Right ventricle myocardium inferior (tissue), 1 donor: ENCODE measurements at regions of chr2 and their contacts with region 1.

Region 1: GRCh38 chr2:46010925-46011490 is 286.2 kb upstream of the EPAS1 start:
- DNase-seq: no peak
- ATAC-seq: no peak

Region 2: DNA sequence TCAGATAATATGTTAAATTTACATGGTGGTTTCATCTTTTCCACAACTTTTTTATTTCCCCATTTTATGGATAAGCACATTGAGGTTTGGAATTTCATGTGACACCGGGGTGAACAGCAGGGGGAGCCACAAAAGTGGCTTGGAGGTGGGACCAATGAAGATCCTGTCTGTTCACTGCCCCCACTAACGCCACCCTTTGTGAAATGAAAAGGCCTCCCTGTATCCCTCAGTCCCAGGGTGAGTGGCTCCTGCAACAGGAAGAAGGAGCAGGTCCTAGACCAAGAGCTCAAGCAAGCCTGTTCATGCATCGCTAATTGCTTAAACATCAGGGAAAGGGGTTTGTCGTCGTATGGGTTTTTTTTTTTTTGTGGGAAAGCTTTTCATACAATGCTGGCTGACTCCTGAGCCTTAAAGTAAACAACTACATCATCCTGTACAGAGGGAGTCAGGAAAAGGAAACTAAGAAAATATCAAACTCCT is 18.4 kb after region 1 on chr2:
- intact Hi-C with region 1: no loop called
- DNase-seq: no peak
- ATAC-seq: peak; percentile 34

Region 3: GRCh38 chr2:46062637-46063412 is 51.8 kb after region 1 on chr2:
- intact Hi-C with region 1: loop called (anchors 5 kb)
- DNase-seq: peak; percentile 78
- ATAC-seq: peak; percentile 77

Region 4: GRCh38 chr2:46142546-46143428 is 131.8 kb after region 1 on chr2:
- intact Hi-C with region 1: no loop called
- DNase-seq: no peak
- ATAC-seq: no peak